H1 (cell line): ENCODE measurements at regions of chr4 and their contacts with region 1.

Region 1: GRCh38 chr4:42119886-42120285 is 32.6 kb downstream of the BEND4 start:
- DNase-seq: no peak
- H3K4me3 ChIP-seq: no peak overlapping the region
- H3K27ac ChIP-seq: no peak overlapping the region
- H3K4me1 ChIP-seq: peaks cover 0 to 7% (median 3%) of the 10 kb centered on the region in 4 experiments; a peak in 3 of 7 replicates
- H3K27me3 ChIP-seq: no peaks in the 10 kb centered on the region
- CTCF ChIP-seq: no peak
- EP300 ChIP-seq: no peak
- POLR2A ChIP-seq: no peak
- RAD21 ChIP-seq: no peak

Region 2: GRCh38 chr4:42132099-42132498 is 12.2 kb after region 1 on chr4:
- CTCF ChIA-PET with region 1: interaction called, 12 read pairs
- POLR2A ChIA-PET with region 1: interaction called, 4 read pairs
- DNase-seq: no peak
- H3K4me3 ChIP-seq: no peak overlapping the region
- H3K27ac ChIP-seq: no peak overlapping the region
- H3K4me1 ChIP-seq: peaks cover 0 to 13% (median 10%) of the 10 kb centered on the region in 4 experiments; a peak in 5 of 7 replicates
- H3K27me3 ChIP-seq: no peaks in the 10 kb centered on the region
- CTCF ChIP-seq: peak in 1 of 3 experiments; percentile 11; a peak in 2 of 4 replicates
- EP300 ChIP-seq: no peak
- POLR2A ChIP-seq: no peak
- RAD21 ChIP-seq: peak in 1 of 2 experiments; percentile 27; a peak in 1 of 4 replicates

Region 3: GRCh38 chr4:42320822-42321388 is 201.0 kb after region 1 on chr4:
- CTCF ChIA-PET with region 1: no interaction called
- POLR2A ChIA-PET with region 1: no interaction called
- DNase-seq: no peak
- H3K4me3 ChIP-seq: no peak overlapping the region
- H3K27ac ChIP-seq: no peak overlapping the region
- H3K4me1 ChIP-seq: no peaks in the 10 kb centered on the region; a peak in 1 of 7 replicates
- H3K27me3 ChIP-seq: no peaks in the 10 kb centered on the region
- CTCF ChIP-seq: no peak
- EP300 ChIP-seq: no peak
- POLR2A ChIP-seq: no peak
- RAD21 ChIP-seq: no peak